Prostate gland (tissue), 2 donors: ENCODE measurements at regions of chr4 and their contacts with region 1.

Region 1: GRCh38 chr4:73593631-73594241 is 26.5 kb downstream of the RASSF6 start:
- DNase-seq: no peak
- H3K4me3 ChIP-seq: no peak overlapping the region
- H3K27ac ChIP-seq: no peak overlapping the region
- H3K4me1 ChIP-seq: no peaks in the 10 kb centered on the region
- H3K27me3 ChIP-seq: no peaks in the 10 kb centered on the region
- CTCF ChIP-seq: peak in 3 of 4 experiments; percentile 48 to 62 (median 60)
- POLR2A ChIP-seq: no peak

Region 2: DNA sequence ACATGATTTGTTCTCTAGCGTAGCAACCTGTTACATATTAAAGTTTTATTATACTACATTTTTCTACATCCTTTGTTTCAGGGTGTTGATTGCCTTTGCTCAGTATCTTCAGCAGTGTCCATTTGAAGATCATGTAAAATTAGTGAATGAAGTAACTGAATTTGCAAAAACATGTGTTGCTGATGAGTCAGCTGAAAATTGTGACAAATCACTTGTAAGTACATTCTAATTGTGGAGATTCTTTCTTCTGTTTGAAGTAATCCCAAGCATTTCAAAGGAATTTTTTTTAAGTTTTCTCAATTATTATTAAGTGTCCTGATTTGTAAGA is 187.2 kb before region 1 on chr4:
- intact Hi-C with region 1: no loop called
- DNase-seq: no peak
- H3K4me3 ChIP-seq: no peak overlapping the region
- H3K27ac ChIP-seq: no peak overlapping the region
- H3K4me1 ChIP-seq: no peaks in the 10 kb centered on the region
- H3K27me3 ChIP-seq: no peaks in the 10 kb centered on the region
- CTCF ChIP-seq: no peak
- POLR2A ChIP-seq: no peak

Region 3: GRCh38 chr4:73653695-73654106 is 60.0 kb after region 1 on chr4:
- intact Hi-C with region 1: loop called (anchors 5 kb)
- DNase-seq: peak; percentile 83
- H3K4me3 ChIP-seq: no peak overlapping the region
- H3K27ac ChIP-seq: peak overlapping the region in 1 of 2 donors; percentile 13
- H3K4me1 ChIP-seq: peaks cover 6% of the 10 kb centered on the region
- H3K27me3 ChIP-seq: no peaks in the 10 kb centered on the region
- CTCF ChIP-seq: peak; percentile 58 to 82 (median 67)
- POLR2A ChIP-seq: no peak

Region 4: DNA sequence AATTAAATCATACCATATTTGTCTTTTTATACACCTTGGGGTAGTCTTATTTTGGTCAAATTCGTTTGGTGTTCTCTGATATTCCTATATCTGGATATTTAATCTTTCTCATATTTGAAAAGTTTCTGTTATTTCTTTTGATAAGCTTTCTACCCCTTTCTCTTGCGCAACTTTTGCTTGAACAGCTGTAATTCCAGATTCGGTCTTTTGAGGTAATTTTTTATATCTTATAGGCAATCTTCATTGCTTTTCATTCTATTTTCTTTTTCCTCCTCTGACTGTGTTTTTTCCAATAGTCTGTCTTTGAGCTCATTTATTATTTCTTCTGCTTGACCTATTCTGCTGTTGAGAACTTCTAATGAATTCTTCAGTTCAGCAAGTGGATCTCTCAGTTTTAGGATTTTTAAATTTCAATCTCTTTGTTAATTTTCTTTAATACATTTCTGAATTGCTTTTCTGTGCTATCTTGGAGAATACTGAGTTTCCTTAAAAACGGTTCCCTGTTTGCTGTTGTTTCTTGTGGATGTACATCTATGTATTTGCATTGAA is 552.9 kb after region 1 on chr4:
- intact Hi-C with region 1: loop called (anchors 10 kb)
- DNase-seq: no peak
- H3K4me3 ChIP-seq: no peak overlapping the region
- H3K27ac ChIP-seq: no peak overlapping the region
- H3K4me1 ChIP-seq: no peaks in the 10 kb centered on the region
- H3K27me3 ChIP-seq: no peaks in the 10 kb centered on the region
- CTCF ChIP-seq: no peak
- POLR2A ChIP-seq: no peak